ENCODE measurements at regions of chr2 and their contacts with region 1.

Region 1: GRCh38 chr2:134897932-134898331 is 20.7 kb upstream of the CCNT2 start:
- DNase-seq: no peak
- H3K4me3 ChIP-seq: no peak overlapping the region
- H3K27ac ChIP-seq: no peak overlapping the region
- H3K4me1 ChIP-seq: no peaks in the 10 kb centered on the region
- H3K27me3 ChIP-seq: no peaks in the 10 kb centered on the region
- CTCF ChIP-seq: peak; percentile 18

Region 2: GRCh38 chr2:134739879-134740301 is 158.0 kb before region 1 on chr2:
- intact Hi-C with region 1: no loop called
- DNase-seq: no peak
- H3K4me3 ChIP-seq: no peak overlapping the region
- H3K27ac ChIP-seq: no peak overlapping the region
- H3K4me1 ChIP-seq: no peaks in the 10 kb centered on the region
- H3K27me3 ChIP-seq: no peaks in the 10 kb centered on the region
- CTCF ChIP-seq: no peak

Region 3: GRCh38 chr2:134782792-134783191 is 115.1 kb before region 1 on chr2:
- intact Hi-C with region 1: loop called (anchors 10 kb)
- DNase-seq: no peak
- H3K4me3 ChIP-seq: no peak overlapping the region
- H3K27ac ChIP-seq: no peak overlapping the region
- H3K4me1 ChIP-seq: no peaks in the 10 kb centered on the region
- H3K27me3 ChIP-seq: no peaks in the 10 kb centered on the region
- CTCF ChIP-seq: peak; percentile 44

Measured in colonic mucosa (tissue), 4 donors.